Left ventricle myocardium inferior (tissue), 1 donor: ENCODE measurements at regions of chr6 and their contacts with region 1.

Region 1: GRCh38 chr6:100116411-100117194 is 122.6 kb upstream of the MCHR2 start:
- DNase-seq: no peak
- H3K4me3 ChIP-seq: no peak overlapping the region
- H3K27ac ChIP-seq: no peak overlapping the region
- H3K4me1 ChIP-seq: no peaks in the 10 kb centered on the region
- H3K27me3 ChIP-seq: peaks cover 35% of the 10 kb centered on the region
- CTCF ChIP-seq: peak; percentile 69

Region 2: GRCh38 chr6:100479179-100480035 is 362.8 kb after region 1 on chr6:
- intact Hi-C with region 1: loop called (anchors 5 kb)
- DNase-seq: no peak
- H3K4me3 ChIP-seq: no peak overlapping the region
- H3K27ac ChIP-seq: no peak overlapping the region
- H3K4me1 ChIP-seq: no peaks in the 10 kb centered on the region
- H3K27me3 ChIP-seq: peaks cover 67% of the 10 kb centered on the region
- CTCF ChIP-seq: peak; percentile 77